Transverse colon (tissue), 4 donors: ENCODE measurements at regions of chr16 and their contacts with region 1.

Region 1: GRCh38 chr16:4852207-4852872 is 5.1 kb downstream of the UBN1 start:
- DNase-seq: peak; percentile 31
- H3K4me3 ChIP-seq: no peak overlapping the region
- H3K27ac ChIP-seq: peak overlapping the region; percentile 38 to 54 (median 42)
- H3K4me1 ChIP-seq: peaks cover 19 to 45% (median 32%) of the 10 kb centered on the region in 4 donors
- H3K27me3 ChIP-seq: no peaks in the 10 kb centered on the region
- CTCF ChIP-seq: no peak
- EP300 ChIP-seq: no peak
- POLR2A ChIP-seq: no peak

Region 2: GRCh38 chr16:4915226-4915761 is 63.0 kb after region 1 on chr16:
- in situ Hi-C with region 1: loop called in 1 of 4 experiments (anchors 10 kb)
- intact Hi-C with region 1: no loop called
- DNase-seq: no peak
- H3K4me3 ChIP-seq: no peak overlapping the region
- H3K27ac ChIP-seq: no peak overlapping the region
- H3K4me1 ChIP-seq: no peaks in the 10 kb centered on the region
- H3K27me3 ChIP-seq: no peaks in the 10 kb centered on the region
- CTCF ChIP-seq: no peak
- EP300 ChIP-seq: no peak
- POLR2A ChIP-seq: no peak

Region 3: GRCh38 chr16:4966736-4967453 is 114.6 kb after region 1 on chr16:
- in situ Hi-C with region 1: no loop called
- intact Hi-C with region 1: no loop called
- DNase-seq: no peak
- H3K4me3 ChIP-seq: no peak overlapping the region
- H3K27ac ChIP-seq: no peak overlapping the region
- H3K4me1 ChIP-seq: no peaks in the 10 kb centered on the region
- H3K27me3 ChIP-seq: no peaks in the 10 kb centered on the region
- CTCF ChIP-seq: no peak
- EP300 ChIP-seq: no peak
- POLR2A ChIP-seq: no peak

Region 4: GRCh38 chr16:5033256-5034169 is 181.2 kb after region 1 on chr16 and contains the start of gene NAGPA:
- in situ Hi-C with region 1: no loop called
- intact Hi-C with region 1: no loop called
- DNase-seq: peak; percentile 92
- H3K4me3 ChIP-seq: peak within 1 kb of the TSS; percentile 40 to 94 (median 80)
- H3K27ac ChIP-seq: peak within 1 kb of the TSS; percentile 75 to 82 (median 78)
- H3K4me1 ChIP-seq: peaks cover 16 to 23% (median 19%) of the 10 kb centered on the region in 4 donors
- H3K27me3 ChIP-seq: no peaks in the 10 kb centered on the region
- CTCF ChIP-seq: no peak
- EP300 ChIP-seq: no peak
- POLR2A ChIP-seq: peak; percentile 48
- total RNA-seq, gene NAGPA: 42.6 to 250 (median 72.7) TPM